ENCODE measurements at regions of chr10 and their contacts with region 1.

Region 1: GRCh38 chr10:94194256-94194655 is 168.5 kb downstream of the NOC3L start:
- DNase-seq: peak; percentile 80
- H3K4me3 ChIP-seq: no peak overlapping the region
- H3K27ac ChIP-seq: no peak overlapping the region
- H3K4me1 ChIP-seq: peaks cover 6% of the 10 kb centered on the region
- H3K27me3 ChIP-seq: peaks cover 2% of the 10 kb centered on the region
- CTCF ChIP-seq: peak in 1 of 2 donors; percentile 30

Region 2: DNA sequence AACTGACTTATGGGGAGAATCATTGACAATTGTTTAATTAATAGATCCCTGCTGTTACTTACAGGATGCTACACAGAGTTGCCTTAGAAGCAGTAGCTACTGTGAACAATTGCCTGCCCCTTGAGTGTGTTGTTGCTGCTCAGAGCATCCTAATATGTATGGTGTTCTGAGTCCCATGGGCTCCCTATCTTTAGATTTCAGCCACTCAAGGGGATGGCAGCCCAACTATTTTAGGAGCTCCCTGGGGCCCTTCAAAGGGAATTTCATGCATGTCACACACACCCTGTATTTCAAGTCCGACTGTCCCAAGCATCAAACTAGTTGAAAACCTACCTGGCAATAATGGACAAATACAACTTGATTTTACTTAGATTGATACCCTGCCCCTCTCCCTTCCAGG is 57.3 kb after region 1 on chr10:
- CTCF ChIA-PET with region 1: no interaction called
- dilution Hi-C with region 1: no loop called
- in situ Hi-C with region 1: no loop called
- intact Hi-C with region 1: loop called (anchors 2 kb)
- DNase-seq: no peak
- H3K4me3 ChIP-seq: no peak overlapping the region
- H3K27ac ChIP-seq: no peak overlapping the region
- H3K4me1 ChIP-seq: no peaks in the 10 kb centered on the region
- H3K27me3 ChIP-seq: no peaks in the 10 kb centered on the region
- CTCF ChIP-seq: no peak

Region 3: DNA sequence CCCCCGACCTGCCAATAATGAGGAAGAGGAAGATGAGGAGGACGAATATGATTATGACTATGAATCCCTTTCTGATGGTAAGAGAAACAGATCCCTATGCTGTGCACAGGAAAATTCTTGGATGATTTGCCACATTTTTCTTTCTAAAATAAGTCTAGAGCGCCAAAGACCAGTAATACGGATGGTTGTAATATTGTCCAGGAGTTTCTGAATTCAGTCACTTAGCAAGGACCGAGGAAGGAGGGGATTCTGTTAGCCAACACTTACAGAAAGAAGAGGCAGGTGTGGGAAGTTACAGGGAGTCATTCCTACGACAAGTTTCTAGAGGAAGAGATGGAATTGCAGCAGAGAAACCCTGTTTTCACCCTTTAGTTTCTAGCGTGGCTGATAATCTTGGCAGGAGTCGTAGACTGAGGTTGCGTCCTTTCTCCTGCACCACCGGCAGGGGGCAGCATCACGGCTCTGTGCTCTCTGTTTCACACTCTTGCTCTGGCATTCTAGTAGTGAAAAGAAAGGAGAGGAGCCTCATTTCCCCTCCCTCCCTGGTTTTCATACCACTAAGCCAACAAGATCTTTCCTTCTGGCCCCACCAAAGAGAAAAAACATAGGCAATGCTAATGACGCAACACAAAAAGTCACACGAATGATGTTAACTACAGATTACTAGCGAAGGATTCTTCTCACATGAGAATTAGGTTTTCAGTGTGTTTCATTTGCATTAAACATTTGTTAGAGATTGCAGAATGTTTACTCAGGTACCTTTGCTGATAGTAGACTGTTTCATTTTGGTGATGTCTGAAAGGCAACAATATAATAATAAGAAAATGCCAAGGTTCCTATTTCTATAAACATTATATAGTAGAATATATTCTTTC is 85.8 kb after region 1 on chr10:
- CTCF ChIA-PET with region 1: no interaction called
- dilution Hi-C with region 1: no loop called
- in situ Hi-C with region 1: no loop called
- intact Hi-C with region 1: no loop called
- DNase-seq: peak; percentile 37
- H3K4me3 ChIP-seq: no peak overlapping the region
- H3K27ac ChIP-seq: no peak overlapping the region
- H3K4me1 ChIP-seq: peaks cover 7% of the 10 kb centered on the region
- H3K27me3 ChIP-seq: no peaks in the 10 kb centered on the region
- CTCF ChIP-seq: peak; percentile 96

Measured in mammary epithelial cell (primary cell).